Activated CD4-positive, alpha-beta T cell treated with anti-CD3 and anti-CD28 coated beads, Interleukin-2, amount 10 ng/mL, durations not matched to agents 7 days and 5 days (primary cell): ENCODE measurements at regions of chr20 and their contacts with region 1.

Region 1: GRCh38 chr20:4610871-4611270 is 110.8 kb upstream of the PRND start:
- DNase-seq: no peak
- H3K4me3 Mint-ChIP-seq: no peak overlapping the region
- H3K27ac Mint-ChIP-seq: no peak overlapping the region
- H3K4me1 Mint-ChIP-seq: peaks cover 6% of the 10 kb centered on the region
- H3K27me3 Mint-ChIP-seq: peaks cover 6% of the 10 kb centered on the region

Region 2: DNA sequence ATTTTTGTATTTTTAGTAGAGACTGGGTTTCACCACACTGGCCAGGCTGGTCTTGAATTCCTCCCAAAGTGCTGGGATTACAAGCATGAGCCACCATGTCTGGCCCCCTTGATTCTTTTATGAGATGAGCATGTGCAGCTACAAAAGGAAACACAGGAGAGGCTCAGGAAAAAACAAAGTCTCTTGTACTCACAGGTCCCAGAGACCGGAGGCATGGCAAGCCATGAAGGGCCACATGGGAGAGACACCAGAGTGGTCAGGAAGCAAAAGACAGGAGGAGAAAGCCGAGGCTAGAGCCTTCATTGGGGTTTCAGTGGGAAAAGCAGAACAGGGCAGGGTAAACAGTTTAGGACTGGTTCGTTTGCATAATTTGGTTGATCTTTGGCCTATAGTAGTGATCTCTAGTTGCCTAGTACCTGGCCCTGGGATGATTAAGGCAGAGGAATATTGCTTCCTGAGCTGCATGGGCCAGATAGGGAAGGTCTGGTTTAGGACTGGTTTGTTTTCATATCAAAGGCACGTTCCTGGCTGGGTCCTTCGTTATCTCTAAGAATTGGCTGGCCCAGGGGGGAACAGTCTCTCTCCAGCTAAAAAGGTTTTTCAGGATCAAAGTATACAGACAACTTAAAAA is 62.6 kb after region 1 on chr20:
- CTCF ChIA-PET with region 1: no interaction called
- POLR2A ChIA-PET with region 1: no interaction called
- DNase-seq: no peak
- H3K4me3 Mint-ChIP-seq: no peak overlapping the region
- H3K27ac Mint-ChIP-seq: no peak overlapping the region
- H3K4me1 Mint-ChIP-seq: peaks cover 7% of the 10 kb centered on the region
- H3K27me3 Mint-ChIP-seq: peaks cover 20% of the 10 kb centered on the region

Region 3: GRCh38 chr20:4720041-4720976 is 109.4 kb after region 1 on chr20:
- CTCF ChIA-PET with region 1: interaction called, 12 read pairs
- POLR2A ChIA-PET with region 1: no interaction called
- DNase-seq: peak; percentile 80
- H3K4me3 Mint-ChIP-seq: no peak overlapping the region
- H3K27ac Mint-ChIP-seq: peak overlapping the region; percentile 26
- H3K4me1 Mint-ChIP-seq: peaks cover 11% of the 10 kb centered on the region
- H3K27me3 Mint-ChIP-seq: peaks cover 2% of the 10 kb centered on the region